ENCODE measurements at regions of chr13 and their contacts with region 1.

Region 1: GRCh38 chr13:110412132-110412914 is 105.2 kb downstream of the COL4A2 start:
- DNase-seq: peak; percentile 40
- ATAC-seq: peak; percentile 87
- H3K4me3 ChIP-seq: no peak overlapping the region
- H3K27ac ChIP-seq: no peak overlapping the region
- H3K4me1 ChIP-seq: peaks cover 4% of the 10 kb centered on the region
- H3K27me3 ChIP-seq: no peaks in the 10 kb centered on the region
- CTCF ChIP-seq: peak; percentile 89 to 94 (median 93)
- EP300 ChIP-seq: no peak
- POLR2A ChIP-seq: no peak
- RAD21 ChIP-seq: peak; percentile 85

Region 2: DNA sequence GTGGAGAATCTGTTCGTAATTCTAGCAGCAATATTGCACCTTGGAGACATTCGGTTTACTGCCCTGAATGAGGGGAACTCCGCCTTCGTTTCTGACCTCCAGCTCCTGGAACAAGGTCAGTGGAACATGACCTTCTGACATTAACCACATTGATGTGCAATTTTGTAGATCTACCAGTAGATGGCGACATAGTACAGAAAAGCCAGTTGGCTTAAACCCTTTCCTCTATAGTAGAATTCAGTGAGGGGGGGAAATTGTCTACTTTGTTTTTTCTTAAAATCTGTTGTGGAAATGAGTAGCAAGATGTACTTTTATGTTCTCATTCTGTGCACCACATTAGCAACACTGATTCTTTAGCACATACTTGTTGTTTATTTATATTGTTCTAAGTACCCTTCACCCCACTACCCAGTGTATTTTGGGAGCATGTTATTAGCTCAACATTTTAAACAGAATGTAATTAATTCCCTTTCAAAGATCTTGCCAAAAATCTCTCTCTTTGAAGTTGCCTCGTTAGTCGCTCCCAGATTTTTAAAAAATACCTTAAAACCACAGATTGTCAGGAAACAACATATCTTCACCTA is 1450.7 kb before region 1 on chr13:
- CTCF ChIA-PET with region 1: no interaction called
- POLR2A ChIA-PET with region 1: no interaction called
- RAD21 ChIA-PET with region 1: interaction called, 3 read pairs
- SMC1A ChIA-PET with region 1: no interaction called
- in situ Hi-C with region 1: loop called (anchors 25 kb)
- intact Hi-C with region 1: loop called (anchors 2 kb)
- DNase-seq: peak; percentile 24
- ATAC-seq: peak; percentile 97
- H3K4me3 ChIP-seq: no peak overlapping the region
- H3K27ac ChIP-seq: no peak overlapping the region
- H3K4me1 ChIP-seq: no peaks in the 10 kb centered on the region
- H3K27me3 ChIP-seq: no peaks in the 10 kb centered on the region
- CTCF ChIP-seq: peak; percentile 68 to 92 (median 76); a peak in 5 of 6 replicates
- EP300 ChIP-seq: no peak
- POLR2A ChIP-seq: no peak
- RAD21 ChIP-seq: peak; percentile 97

Region 3: DNA sequence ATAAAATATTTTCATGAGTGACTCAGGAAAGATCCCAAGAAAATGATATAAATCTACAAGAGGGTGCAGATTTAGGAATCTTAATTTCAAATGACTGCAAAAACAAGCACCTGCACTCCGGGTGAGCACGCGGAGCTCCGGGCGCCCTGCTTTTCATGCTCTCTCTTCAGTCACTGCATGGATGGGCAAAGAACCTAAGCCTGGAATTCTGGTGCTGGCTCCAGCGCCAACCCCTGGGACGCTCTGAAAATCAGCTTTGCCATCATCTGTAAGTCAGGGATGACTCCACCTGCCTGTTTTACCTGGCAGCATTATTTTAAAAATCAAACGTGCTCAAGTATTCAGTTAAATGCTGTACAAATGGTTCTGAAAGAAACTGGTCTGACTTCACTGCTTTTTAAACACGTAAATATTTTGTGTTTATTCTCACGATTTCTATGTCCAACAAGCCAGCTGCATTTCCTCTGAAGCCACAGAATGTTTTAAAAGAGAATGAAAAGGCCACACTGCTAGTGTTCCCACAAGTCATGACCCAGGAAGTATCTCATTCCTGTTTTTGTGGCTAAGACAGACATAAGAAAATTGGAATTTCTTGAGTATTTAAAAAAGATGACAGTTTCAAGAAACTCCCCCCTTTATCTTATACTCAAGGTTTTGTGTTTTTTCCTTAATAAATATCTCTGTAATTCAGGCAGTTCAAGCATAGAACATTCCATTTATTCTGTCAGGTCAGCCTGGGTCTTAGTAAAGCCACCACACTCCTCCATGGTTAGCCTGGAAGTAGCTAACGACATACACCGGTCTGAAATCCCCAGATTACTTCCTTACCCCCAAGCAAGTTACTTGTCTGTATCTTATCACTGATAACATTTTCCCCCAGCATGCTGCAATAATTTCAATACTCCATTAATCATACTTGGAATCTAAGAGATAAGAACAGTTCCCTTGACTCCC is 186.4 kb before region 1 on chr13:
- CTCF ChIA-PET with region 1: interaction called, 80 read pairs
- POLR2A ChIA-PET with region 1: no interaction called
- RAD21 ChIA-PET with region 1: interaction called, 17 read pairs
- SMC1A ChIA-PET with region 1: interaction called, 34 read pairs
- in situ Hi-C with region 1: loop called (anchors 5 kb)
- intact Hi-C with region 1: loop called (anchors 1 kb)
- DNase-seq: no peak
- ATAC-seq: no peak
- H3K4me3 ChIP-seq: no peak overlapping the region
- H3K27ac ChIP-seq: no peak overlapping the region
- H3K4me1 ChIP-seq: no peaks in the 10 kb centered on the region
- H3K27me3 ChIP-seq: no peaks in the 10 kb centered on the region; a peak in 1 of 4 replicates
- CTCF ChIP-seq: no peak
- EP300 ChIP-seq: no peak
- POLR2A ChIP-seq: no peak
- RAD21 ChIP-seq: no peak

Region 4: DNA sequence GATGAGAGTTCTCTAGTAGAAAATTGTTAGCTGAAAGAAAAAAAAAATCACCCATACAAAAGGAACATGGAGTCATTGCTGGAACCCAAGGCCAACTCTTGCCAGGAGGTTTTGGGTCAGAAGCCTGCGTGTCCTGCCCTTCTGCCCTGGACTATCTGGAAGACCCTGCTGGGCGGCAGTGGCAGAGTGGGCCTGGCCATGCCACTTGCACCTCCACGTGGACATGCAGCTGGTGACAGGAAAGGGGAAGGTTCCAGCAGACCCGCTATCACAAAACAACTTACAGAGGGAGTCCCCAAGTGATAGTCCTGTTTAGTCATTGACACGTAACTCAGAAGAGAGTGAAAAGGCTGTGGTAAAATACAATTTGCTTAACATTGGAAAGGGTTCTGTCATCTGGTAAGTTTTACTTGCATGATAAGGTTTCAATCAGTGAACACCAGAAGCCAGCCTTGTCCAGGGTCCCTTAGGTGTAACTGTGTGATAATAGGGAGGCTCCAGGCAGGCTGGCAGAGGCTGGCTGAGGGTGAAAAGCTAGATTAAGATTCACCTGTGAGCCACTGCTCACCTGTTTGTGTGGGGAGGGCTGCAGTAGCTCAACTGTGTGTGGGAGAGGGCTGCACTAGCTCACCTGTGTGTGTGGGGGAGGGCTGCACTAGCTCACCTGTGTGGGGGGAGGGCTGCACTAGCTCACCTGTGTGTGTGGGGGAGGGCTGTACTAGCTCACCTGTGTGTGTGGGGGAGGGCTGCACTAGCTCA is 57.4 kb before region 1 on chr13:
- CTCF ChIA-PET with region 1: interaction called, 19 read pairs
- POLR2A ChIA-PET with region 1: interaction called, 5 read pairs
- RAD21 ChIA-PET with region 1: interaction called, 6 read pairs
- SMC1A ChIA-PET with region 1: interaction called, 10 read pairs
- in situ Hi-C with region 1: no loop called
- intact Hi-C with region 1: loop called (anchors 1 kb)
- DNase-seq: no peak
- ATAC-seq: peak; percentile 75
- H3K4me3 ChIP-seq: no peak overlapping the region
- H3K27ac ChIP-seq: no peak overlapping the region
- H3K4me1 ChIP-seq: no peaks in the 10 kb centered on the region; the same call in 1 of the 2 replicates
- H3K27me3 ChIP-seq: no peaks in the 10 kb centered on the region
- CTCF ChIP-seq: no peak
- EP300 ChIP-seq: no peak
- POLR2A ChIP-seq: no peak
- RAD21 ChIP-seq: no peak

Region 5: DNA sequence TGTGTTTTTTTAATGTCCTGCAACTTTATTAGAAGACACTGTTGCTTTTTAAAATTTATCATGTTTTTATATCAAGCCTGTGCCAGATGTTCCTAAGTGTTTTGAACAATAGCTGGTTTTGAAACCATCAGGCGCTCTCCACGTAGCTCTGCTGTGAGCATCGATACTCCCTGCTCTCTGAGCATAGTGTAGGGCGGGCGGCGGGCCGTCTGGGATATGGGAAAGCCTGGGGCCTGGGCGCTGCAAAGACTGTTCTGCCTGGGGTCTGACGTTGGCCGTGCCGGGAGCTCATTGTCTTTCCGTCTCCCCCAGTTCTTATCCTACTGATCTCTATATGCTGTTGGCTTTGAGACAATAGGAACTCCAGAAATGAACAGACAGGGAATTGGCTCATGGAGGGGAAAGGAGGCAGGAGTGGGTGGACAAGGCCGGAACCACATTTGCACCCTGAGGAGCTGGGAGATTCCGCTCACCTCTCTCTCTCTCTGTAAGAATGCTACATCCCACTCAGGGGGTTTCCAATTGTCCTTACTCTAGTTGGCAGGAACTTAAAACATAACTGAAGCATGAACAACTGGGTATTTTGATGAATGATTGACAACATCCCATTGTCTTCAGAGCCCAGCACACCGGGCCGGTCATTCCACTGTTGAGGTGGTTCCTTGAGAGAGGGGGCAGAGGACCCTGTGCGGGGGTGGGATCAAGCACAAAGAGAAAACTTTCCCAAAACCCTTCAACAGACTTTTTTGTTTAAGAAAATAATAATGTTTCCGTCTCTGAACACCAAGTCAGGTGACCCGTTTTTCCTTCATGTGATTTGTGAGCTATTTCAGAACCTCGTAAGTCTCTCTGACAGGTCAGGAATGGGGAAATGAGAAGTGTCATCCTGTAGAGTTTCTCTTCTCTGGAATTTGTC is 40.5 kb before region 1 on chr13:
- CTCF ChIA-PET with region 1: interaction called, 10 read pairs
- POLR2A ChIA-PET with region 1: interaction called, 5 read pairs
- RAD21 ChIA-PET with region 1: interaction called, 3 read pairs
- SMC1A ChIA-PET with region 1: interaction called, 43 read pairs
- in situ Hi-C with region 1: no loop called
- intact Hi-C with region 1: loop called (anchors 5 kb)
- DNase-seq: peak; percentile 40
- ATAC-seq: peak; percentile 86
- H3K4me3 ChIP-seq: no peak overlapping the region
- H3K27ac ChIP-seq: no peak overlapping the region
- H3K4me1 ChIP-seq: no peaks in the 10 kb centered on the region
- H3K27me3 ChIP-seq: no peaks in the 10 kb centered on the region
- CTCF ChIP-seq: no peak
- EP300 ChIP-seq: peak; percentile 10 to 54; a peak in 2 of 4 replicates
- POLR2A ChIP-seq: no peak
- RAD21 ChIP-seq: no peak

Region 6: GRCh38 chr13:110575322-110576069 is 163.2 kb after region 1 on chr13:
- CTCF ChIA-PET with region 1: no interaction called
- POLR2A ChIA-PET with region 1: no interaction called
- RAD21 ChIA-PET with region 1: no interaction called
- SMC1A ChIA-PET with region 1: no interaction called
- in situ Hi-C with region 1: no loop called
- intact Hi-C with region 1: no loop called
- DNase-seq: peak; percentile 43
- ATAC-seq: peak; percentile 90
- H3K4me3 ChIP-seq: peak overlapping the region; percentile 69; the same call in 1 of the 2 replicates
- H3K27ac ChIP-seq: 0 out of 2 replicates have a peak overlapping the region, but pooled peaks have one; percentile 8
- H3K4me1 ChIP-seq: peaks cover 18% of the 10 kb centered on the region
- H3K27me3 ChIP-seq: no peaks in the 10 kb centered on the region; a peak in 1 of 4 replicates
- CTCF ChIP-seq: peak in 1 of 3 experiments; percentile 16; a peak in 2 of 6 replicates
- EP300 ChIP-seq: no peak
- POLR2A ChIP-seq: no peak; the same call in 1 of the 2 replicates
- RAD21 ChIP-seq: no peak